Activated T-helper 2 cell treated with anti-CD3 and anti-CD28 coated beads, Interferon-gamma antibody, Interleukin-2, Interleukin-4, amounts not matched to agents 10 μg/mL and 5 μg/mL and 100 μg/mL, durations not matched to agents 14 hours and 24 hours and 36 hours (primary cell): ENCODE measurements at regions of chr1 and their contacts with region 1.

Region 1: GRCh38 chr1:203038891-203039608 is 12.8 kb downstream of the PPFIA4 start:
- DNase-seq: peak; percentile 44
- H3K4me3 Mint-ChIP-seq: no peak overlapping the region
- H3K27ac Mint-ChIP-seq: no peak overlapping the region
- H3K4me1 Mint-ChIP-seq: peaks cover 9% of the 10 kb centered on the region
- H3K27me3 Mint-ChIP-seq: no peaks in the 10 kb centered on the region

Region 2: GRCh38 chr1:203172128-203173010 is 133.3 kb after region 1 on chr1:
- intact Hi-C with region 1: loop called (anchors 1 kb)
- DNase-seq: peak; percentile 19
- H3K4me3 Mint-ChIP-seq: no peak overlapping the region
- H3K27ac Mint-ChIP-seq: no peak overlapping the region
- H3K4me1 Mint-ChIP-seq: no peaks in the 10 kb centered on the region
- H3K27me3 Mint-ChIP-seq: no peaks in the 10 kb centered on the region

Region 3: GRCh38 chr1:203216274-203217138 is 177.5 kb after region 1 on chr1:
- intact Hi-C with region 1: loop called (anchors 1 kb)
- DNase-seq: peak; percentile 41
- H3K4me3 Mint-ChIP-seq: no peak overlapping the region
- H3K27ac Mint-ChIP-seq: no peak overlapping the region
- H3K4me1 Mint-ChIP-seq: no peaks in the 10 kb centered on the region
- H3K27me3 Mint-ChIP-seq: peaks cover 14% of the 10 kb centered on the region